Lower leg skin (tissue), 4 donors: ENCODE measurements at regions of chr1 and their contacts with region 1.

Region 1: GRCh38 chr1:186679924-186680244 is 339 bp downstream of the PTGS2 start:
- DNase-seq: no peak
- H3K4me3 ChIP-seq: peak overlapping the region; percentile 66
- CTCF ChIP-seq: no peak
- POLR2A ChIP-seq: no peak

Region 2: DNA sequence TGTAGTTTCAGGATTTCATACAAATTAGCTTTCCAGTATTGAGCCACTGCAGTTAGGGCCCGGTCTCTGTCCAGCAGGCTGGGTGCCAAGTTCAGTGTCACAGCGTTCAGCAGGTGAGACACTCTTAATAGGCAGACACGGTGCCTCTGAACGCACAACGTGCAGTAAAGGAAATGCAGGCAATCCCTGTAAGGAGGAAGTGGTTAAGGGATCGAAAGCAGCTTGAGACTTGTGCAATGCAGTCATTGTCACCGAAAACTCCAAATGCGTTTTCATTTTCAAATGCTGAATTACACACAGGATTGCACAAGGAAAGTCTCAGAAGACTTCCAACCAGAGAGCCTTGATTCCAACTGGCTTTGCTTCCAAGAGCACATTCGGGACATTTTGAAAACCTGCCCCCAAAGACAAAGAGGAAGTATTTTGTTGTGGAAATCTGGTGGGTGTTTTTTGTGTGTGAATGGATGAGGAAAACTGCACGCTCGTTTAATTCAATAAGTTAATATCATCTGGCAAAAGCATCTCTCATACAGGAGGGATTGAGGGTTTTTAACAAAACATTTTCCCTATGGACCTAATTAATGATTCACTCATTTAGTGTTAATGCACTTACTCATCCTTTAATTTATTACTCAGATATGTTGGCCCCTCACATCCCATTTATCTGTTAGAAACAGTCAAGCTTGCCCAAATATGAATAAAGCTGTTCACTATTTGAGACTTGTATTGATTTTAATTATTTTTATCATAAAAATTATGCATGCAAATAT is 61.3 kb before region 1 on chr1:
- intact Hi-C with region 1: loop called (anchors 10 kb)
- DNase-seq: peak in 1 of 2 donors; percentile 63
- H3K4me3 ChIP-seq: no peak overlapping the region
- CTCF ChIP-seq: no peak
- POLR2A ChIP-seq: no peak